ENCODE measurements at regions of chr19 and their contacts with region 1.

Region 1: DNA sequence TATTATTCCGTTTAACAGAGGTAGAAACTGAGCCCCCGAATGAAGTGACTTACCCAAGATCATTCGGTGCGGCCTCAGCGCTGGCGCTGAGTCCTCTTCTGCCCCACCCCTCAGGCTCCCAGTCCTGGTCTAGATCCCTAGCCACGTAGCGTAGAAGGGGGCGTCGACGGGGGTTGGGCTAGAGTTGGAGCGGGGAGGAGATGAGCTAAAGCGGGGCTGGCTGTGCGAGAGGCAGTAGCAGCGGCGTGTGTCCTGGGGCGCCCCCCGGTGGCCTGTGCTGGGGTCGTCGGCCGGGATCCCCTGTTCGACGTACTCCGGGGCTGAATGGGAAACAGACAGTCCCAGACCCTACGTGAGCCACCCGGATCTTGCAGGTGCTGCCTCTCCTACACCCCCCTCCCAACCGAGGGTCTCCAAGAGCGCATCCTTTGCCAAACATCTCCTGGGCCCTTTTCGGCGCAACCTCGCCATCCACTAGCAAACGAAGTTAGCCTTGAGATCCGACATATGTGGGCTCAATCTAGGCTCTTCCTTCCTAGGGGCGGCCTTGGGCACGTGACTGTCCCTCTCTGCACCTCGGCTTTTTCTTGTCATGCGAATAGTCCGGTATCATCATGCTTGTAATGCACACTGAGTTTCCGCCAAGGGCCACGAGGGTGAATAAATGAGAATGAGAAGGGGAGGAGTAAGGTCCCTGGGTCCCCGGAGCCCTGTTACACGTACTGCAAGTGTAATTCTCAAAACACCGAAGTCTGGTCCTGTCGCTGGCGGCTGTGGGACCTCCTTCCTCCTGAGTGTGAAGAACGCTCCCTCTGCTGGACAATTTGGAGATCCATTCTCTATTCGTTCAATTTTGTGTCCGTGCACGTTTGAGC is 47.7 kb downstream of the CYP4F22 start:
- DNase-seq: peak; percentile 69 to 91 (median 82)

Region 2: DNA sequence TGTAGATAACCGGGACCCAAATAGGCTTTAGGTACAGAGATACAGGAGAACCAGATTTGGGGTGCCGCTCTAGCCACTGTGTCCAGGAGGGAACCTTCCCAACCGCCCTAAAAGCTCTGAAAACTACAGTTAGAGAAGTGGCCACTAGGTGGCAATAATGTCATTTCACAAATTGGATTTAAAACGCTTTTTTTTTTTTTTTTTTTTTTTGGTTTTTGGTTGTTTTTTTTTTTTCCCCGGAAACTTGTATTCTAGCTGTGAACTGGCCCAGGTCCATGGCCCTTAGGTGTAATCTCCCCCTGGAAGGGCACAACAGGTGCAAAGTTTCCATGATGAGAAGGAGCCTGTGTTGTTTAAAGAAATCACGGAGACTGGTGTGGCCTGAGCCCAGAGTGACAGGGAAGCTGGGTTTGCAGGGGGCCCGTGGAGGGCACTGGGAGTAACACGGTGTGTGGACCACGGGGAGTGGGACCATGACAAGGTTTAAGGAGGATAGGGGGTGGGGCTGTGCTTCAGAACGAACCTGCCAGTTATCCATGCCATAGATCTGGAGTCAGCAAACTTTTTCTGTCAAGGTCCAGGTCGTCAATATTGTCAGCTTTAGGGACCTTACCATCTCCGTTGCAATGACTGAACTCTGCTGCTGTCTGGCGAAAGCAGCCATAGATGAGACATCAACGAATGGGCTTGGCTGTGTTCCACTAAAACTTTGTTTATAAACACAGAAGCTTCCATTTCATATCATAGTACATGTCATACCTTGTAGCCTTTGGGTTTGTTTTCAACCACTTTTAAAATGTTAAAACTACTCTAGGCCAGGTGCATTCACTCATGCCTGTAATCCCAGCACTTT is 463.9 kb before region 1 on chr19:
- intact Hi-C with region 1: loop called (anchors 5 kb)
- DNase-seq: peak in 16 of 42 donors; percentile 10 to 74 (median 38)

Region 3: DNA sequence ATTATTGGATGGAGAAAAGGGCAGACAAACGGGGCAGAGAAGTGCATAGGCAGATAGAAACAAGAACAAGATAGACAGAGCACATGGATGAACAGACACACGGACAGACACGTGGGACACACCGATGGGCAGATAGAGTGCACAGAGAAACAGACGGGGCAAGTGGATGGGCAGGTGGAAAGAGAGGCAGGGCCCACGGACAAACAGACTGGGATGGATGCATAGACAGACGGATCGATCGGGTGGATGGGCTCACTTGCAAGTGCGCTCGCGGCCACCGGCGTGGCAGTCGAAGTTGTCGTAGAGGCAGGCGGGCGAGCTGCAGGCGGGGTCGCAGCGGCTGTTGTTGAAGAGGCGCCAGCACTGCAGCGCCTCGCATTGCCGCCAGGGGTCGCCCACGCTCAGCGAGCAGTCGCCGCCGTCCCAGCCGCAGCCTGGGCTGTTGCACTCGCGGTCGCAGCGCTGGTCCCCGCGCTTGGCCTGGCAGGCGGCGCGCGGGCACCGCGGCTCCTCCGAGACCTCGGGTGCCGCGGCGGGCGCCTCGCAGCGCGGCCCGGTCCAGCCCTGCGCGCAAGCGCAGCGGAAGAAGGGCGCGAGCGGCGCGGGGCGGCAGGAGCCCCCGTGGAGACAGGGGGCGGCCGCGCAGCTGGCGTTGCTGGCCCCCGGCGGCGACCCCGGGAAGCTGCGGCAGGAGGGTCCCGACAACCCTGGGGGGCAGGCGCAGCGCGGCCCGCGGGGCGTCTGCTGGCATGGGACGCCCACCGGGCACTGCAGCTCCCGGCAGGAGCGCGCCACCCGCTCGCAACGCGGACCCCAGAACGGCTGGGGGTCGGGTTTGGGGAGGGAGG is 378.5 kb before region 1 on chr19:
- intact Hi-C with region 1: loop called (anchors 10 kb)
- DNase-seq: peak; percentile 37 to 92 (median 82)

Region 4: DNA sequence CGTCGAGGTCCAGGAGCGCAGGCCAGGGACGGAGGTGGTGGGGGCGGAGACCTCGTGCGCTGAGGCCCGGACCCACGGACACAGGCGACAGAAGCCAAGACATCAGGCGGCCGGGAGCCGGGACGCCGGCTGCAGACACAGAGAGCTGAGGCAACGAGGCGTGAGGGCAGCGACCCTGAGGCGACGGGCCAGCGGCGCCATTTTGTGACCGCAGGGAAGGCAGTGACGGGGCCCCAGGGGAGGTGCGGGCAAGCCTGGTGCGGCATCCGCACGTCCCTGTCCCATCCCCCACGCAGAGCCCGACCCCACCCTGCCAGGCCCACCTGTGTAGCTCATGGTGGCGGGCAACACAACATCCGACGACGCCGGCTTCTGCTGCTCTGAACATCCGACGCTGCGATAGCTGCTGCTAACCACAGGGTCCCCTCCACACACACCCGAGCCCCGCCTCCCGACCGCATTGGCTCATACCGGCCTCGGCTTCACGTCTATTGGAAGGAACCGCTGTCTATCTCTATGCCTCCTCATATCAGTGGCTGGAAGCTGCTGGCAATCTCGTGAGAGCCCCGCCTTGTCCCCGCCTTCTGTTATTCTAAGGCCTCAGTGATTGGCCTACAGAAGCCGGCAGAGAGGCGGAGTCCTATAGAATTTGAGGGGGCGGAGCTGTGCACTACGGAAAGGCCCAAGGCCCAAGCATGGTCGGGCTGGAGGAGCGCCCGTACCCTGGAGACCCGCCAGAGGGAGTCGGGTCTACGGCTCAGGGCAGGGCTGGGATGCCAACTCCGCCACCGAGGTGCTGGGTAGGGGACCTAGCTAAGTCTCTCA is 137.2 kb before region 1 on chr19 and contains the start of gene AKAP8L:
- intact Hi-C with region 1: loop called (anchors 10 kb)
- DNase-seq: peak; percentile 91 to 100 (median 97)

Region 5: GRCh38 chr19:15437355-15438137 is 118.5 kb before region 1 on chr19:
- intact Hi-C with region 1: no loop called
- DNase-seq: no peak